ENCODE measurements at regions of chr16 and their contacts with region 1.

Region 1: GRCh38 chr16:19555162-19555937 is at the start of gene VPS35L:
- DNase-seq: peak; percentile 95 to 99
- ATAC-seq: peak; percentile 94 to 99 (median 95)
- H3K4me3 ChIP-seq: peak within 1 kb of the TSS; percentile 68
- H3K4me3 Mint-ChIP-seq: peak within 1 kb of the TSS; percentile 96
- H3K27ac ChIP-seq: peak within 1 kb of the TSS; percentile 79
- H3K27ac Mint-ChIP-seq: peak within 1 kb of the TSS; percentile 90 to 99
- H3K4me1 ChIP-seq: peaks cover 16% of the 10 kb centered on the region
- H3K4me1 Mint-ChIP-seq: peaks cover 15 to 23% of the 10 kb centered on the region in 2 donors
- H3K27me3 ChIP-seq: no peaks in the 10 kb centered on the region
- H3K27me3 Mint-ChIP-seq: no peaks in the 10 kb centered on the region
- CTCF ChIP-seq: peak; percentile 79
- total RNA-seq, gene VPS35L: 37.4 to 53.5 (median 44.4) TPM

Region 2: DNA sequence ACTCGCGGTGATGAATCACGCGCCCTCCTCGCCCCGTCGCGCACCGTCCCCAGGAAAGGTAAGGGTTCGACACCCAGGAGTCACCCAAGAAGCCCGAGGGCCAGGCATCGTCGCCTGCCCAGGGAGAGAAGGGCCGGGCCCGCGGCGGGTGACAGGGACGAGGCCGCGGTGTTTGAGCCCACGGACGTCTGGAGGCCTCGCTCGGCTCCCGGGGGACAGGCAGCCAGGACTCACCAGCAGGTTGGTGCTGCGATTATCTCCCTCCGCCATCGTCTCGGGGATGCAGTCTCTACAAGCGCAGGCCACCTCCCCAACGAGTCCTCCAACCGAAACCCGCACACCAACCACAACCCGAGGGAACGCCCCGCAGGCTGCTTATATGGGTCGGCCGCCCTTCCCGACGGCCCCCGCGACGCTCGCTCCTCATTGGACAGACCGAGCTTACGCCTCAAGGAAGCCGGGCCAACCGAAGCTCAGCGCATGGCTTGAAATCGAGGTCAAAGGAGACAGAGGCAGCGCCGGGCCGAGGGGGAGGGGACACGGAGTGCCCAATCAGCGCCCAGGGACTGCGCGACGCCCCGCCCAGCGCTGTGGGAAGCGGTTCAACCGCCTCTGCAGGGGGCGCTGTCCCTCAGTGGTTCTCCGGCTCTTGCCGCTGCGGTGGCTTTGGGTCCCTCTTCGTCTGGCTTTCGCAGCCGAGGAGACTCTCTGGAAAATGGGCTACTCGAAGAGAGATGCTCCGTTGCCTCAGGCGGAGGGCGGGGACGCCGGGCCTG is 754.0 kb before region 1 on chr16 and contains the start of gene ARL6IP1:
- intact Hi-C with region 1: loop called (anchors 5 kb)
- DNase-seq: peak; percentile 98 to 100
- ATAC-seq: peak; percentile 92 to 99 (median 94)
- H3K4me3 ChIP-seq: peak within 1 kb of the TSS; percentile 83
- H3K4me3 Mint-ChIP-seq: peak within 1 kb of the TSS; percentile 96
- H3K27ac ChIP-seq: peak within 1 kb of the TSS; percentile 84
- H3K27ac Mint-ChIP-seq: peak within 1 kb of the TSS; percentile 94 to 95
- H3K4me1 ChIP-seq: peaks cover 28% of the 10 kb centered on the region
- H3K4me1 Mint-ChIP-seq: peaks cover 45 to 60% of the 10 kb centered on the region in 2 donors
- H3K27me3 ChIP-seq: no peaks in the 10 kb centered on the region
- H3K27me3 Mint-ChIP-seq: no peaks in the 10 kb centered on the region
- CTCF ChIP-seq: peak; percentile 82
- total RNA-seq, gene ARL6IP1: 138 to 143 (median 140) TPM

Region 3: DNA sequence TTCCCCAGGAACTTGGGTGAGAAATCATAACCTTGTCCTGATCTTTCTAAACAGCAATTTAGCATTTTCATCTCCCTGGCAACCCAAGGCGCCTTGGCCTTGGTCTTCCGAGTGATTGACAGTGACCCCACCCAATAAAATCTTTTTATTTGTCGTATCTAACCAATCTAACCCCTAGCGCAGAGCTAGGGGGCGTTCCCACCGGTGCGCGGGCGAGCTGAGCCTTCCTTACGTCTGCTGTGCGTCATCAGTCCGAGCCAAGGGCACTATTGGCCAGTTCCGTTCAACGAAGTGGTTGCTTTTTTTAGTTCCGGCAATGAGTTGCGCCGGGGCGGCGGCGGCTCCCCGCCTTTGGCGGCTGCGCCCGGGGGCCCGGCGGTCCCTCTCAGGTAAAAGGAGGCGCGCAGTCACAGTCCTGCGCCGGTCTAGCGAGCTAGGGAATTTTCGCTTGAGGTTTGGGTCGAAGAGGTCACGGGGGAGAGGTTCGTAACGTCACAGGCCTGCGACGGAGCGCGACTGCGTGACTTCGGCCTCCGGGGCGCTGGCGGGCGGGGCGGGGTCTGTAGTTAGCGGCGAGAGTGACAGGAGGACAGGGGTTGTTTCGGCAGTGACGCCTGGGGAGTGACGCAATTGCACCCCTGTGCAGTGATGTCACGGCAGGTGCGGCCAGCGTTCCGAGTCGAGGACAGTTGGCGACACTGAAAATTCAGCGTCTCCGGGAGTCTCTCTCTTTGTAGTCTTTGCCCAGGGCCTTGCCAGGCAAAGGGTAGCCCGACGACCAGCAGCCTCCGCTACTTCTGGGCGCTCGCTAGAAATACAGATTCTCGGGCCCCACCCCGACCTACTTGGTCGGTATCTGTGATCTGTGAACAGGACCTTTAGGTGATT is 487.8 kb before region 1 on chr16 and contains the start of gene COQ7:
- intact Hi-C with region 1: loop called (anchors 2 kb)
- DNase-seq: peak; percentile 98 to 100
- ATAC-seq: peak; percentile 86 to 95 (median 86)
- H3K4me3 ChIP-seq: peak within 1 kb of the TSS; percentile 53
- H3K4me3 Mint-ChIP-seq: peak within 1 kb of the TSS; percentile 92
- H3K27ac ChIP-seq: peak within 1 kb of the TSS; percentile 92
- H3K27ac Mint-ChIP-seq: peak within 1 kb of the TSS; percentile 99
- H3K4me1 ChIP-seq: peaks cover 12% of the 10 kb centered on the region
- H3K4me1 Mint-ChIP-seq: peaks cover 11 to 15% of the 10 kb centered on the region in 2 donors
- H3K27me3 ChIP-seq: no peaks in the 10 kb centered on the region
- H3K27me3 Mint-ChIP-seq: peaks cover 0 to 5% of the 10 kb centered on the region in 2 donors
- CTCF ChIP-seq: no peak
- total RNA-seq, gene COQ7: 16.3 to 17.9 (median 17.1) TPM

Region 4: DNA sequence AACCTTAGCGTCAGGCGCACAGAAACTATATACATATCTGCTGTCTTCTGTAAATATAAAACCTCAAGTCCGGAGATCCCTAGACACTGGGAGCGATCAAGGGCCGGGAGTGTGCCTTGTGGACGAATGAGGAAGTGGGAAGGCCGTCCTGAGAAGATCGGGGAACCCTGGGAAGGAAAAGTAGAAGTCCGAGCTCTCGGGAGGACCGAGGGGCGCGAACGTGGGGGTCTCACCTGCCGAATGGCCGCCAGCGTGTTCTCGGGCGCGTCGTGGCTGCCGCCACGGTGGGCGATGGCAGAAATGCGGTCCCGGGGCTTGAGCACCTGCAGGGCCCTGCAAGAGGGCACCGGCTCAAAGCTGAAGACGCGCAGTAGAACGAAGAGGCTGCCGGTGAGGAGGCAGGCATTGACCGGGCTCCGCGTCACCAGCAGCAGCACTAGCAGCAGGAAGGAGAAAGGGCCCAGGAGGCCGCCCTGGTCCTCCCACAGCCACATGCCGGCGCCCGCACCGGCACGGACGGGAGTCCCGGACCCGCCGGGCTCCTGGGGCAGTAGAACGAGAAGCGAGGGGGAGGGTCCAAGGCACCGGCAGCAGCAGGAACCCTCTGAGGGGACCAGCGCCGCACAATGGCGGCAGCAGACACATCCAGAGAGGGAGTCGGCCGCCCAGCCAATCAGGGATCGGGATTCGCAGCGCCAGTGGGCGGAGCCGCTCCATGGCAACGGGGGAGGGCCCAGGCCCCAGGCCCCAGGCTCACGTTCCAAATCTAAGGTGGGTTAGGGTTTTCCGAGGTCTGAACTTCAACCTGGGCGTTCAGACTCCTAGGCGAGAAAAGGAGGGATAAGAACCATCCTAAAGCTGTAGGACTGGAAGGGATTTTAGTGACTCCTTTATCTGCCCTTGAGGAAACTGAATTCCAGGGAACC is 33.6 kb before region 1 on chr16 and contains the start of gene GDE1:
- intact Hi-C with region 1: loop called (anchors 1 kb)
- DNase-seq: peak; percentile 84 to 94
- ATAC-seq: peak; percentile 73 to 85 (median 76)
- H3K4me3 ChIP-seq: peak within 1 kb of the TSS; percentile 79
- H3K4me3 Mint-ChIP-seq: peak within 1 kb of the TSS; percentile 98
- H3K27ac ChIP-seq: peak within 1 kb of the TSS; percentile 77
- H3K27ac Mint-ChIP-seq: peak within 1 kb of the TSS; percentile 92 to 94
- H3K4me1 ChIP-seq: peaks cover 33% of the 10 kb centered on the region
- H3K4me1 Mint-ChIP-seq: peaks cover 64 to 72% of the 10 kb centered on the region in 2 donors
- H3K27me3 ChIP-seq: no peaks in the 10 kb centered on the region
- H3K27me3 Mint-ChIP-seq: no peaks in the 10 kb centered on the region
- CTCF ChIP-seq: no peak
- total RNA-seq, gene GDE1: 35.5 to 40.4 (median 35.9) TPM

Region 5: GRCh38 chr16:19717771-19718602 is 162.6 kb after region 1 on chr16 and contains the starts of genes IQCK and KNOP1:
- intact Hi-C with region 1: loop called (anchors 1 kb)
- DNase-seq: peak; percentile 84 to 97
- ATAC-seq: peak; percentile 90 to 96 (median 94)
- H3K4me3 ChIP-seq: peak within 1 kb of the TSS; percentile 64
- H3K4me3 Mint-ChIP-seq: peak within 1 kb of the TSS; percentile 95
- H3K27ac ChIP-seq: no peak within 1 kb of the TSS
- H3K27ac Mint-ChIP-seq: peak within 1 kb of the TSS; percentile 79 to 86
- H3K4me1 ChIP-seq: peaks cover 13% of the 10 kb centered on the region
- H3K4me1 Mint-ChIP-seq: peaks cover 28 to 37% of the 10 kb centered on the region in 2 donors
- H3K27me3 ChIP-seq: no peaks in the 10 kb centered on the region
- H3K27me3 Mint-ChIP-seq: no peaks in the 10 kb centered on the region
- CTCF ChIP-seq: no peak
- total RNA-seq, gene IQCK: 0.38 to 1.8 (median 0.68) TPM
- total RNA-seq, gene KNOP1: 5.6 to 8.0 (median 6.9) TPM

Region 6: DNA sequence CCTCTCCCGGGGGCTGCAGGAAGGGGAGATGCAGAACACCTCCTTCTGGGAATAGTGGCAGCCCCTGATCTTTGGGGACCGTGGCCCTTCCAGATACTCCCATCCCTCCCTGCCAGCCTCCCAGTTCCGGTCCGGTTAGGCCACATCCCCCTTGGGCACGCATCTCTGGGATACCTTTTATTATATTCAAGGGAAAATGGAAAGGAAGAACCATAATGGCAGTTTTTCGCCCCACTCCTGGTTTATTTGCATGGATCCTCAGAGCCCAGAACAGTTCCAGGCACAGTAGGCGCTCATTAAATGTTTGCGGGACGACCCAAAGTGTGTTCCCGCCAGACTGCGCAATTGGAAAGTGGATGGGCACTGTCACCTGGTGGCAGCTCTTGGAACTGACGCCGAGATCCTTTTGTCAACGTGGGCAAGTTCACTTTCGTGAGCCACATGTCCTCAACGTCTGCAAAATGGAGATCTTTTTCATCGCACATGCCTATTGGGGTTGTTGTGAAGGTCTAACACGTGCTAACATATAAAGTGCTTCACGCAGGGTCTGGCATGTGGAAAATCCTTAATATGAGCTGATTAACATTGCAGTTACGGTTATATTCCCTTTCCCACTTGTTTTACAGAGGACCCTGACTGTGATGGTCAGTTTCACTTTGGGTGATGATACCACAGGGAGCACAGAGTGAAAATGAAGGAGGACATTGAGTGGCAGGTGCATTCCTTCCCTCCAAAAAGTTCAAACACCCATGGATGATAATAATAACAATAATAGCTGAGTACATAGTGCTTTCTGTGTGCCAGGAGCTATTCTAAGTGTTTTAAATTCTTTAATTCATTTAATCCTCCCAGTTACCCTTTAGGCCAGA is 331.0 kb after region 1 on chr16:
- intact Hi-C with region 1: loop called (anchors 1 kb)
- DNase-seq: peak; percentile 55 to 90
- ATAC-seq: peak; percentile 51 to 72 (median 69)
- H3K4me3 ChIP-seq: no peak overlapping the region
- H3K4me3 Mint-ChIP-seq: peak overlapping the region; percentile 79
- H3K27ac ChIP-seq: no peak overlapping the region
- H3K27ac Mint-ChIP-seq: no peak overlapping the region
- H3K4me1 ChIP-seq: peaks cover 27% of the 10 kb centered on the region
- H3K4me1 Mint-ChIP-seq: peaks cover 15 to 23% of the 10 kb centered on the region in 2 donors
- H3K27me3 ChIP-seq: peaks cover 22% of the 10 kb centered on the region
- H3K27me3 Mint-ChIP-seq: peaks cover 30 to 32% of the 10 kb centered on the region in 2 donors
- CTCF ChIP-seq: peak; percentile 85

Measured in natural killer cell (primary cell).